Testis (tissue), 5 donors: ENCODE measurements at regions of chr20 and their contacts with region 1.

Region 1: DNA sequence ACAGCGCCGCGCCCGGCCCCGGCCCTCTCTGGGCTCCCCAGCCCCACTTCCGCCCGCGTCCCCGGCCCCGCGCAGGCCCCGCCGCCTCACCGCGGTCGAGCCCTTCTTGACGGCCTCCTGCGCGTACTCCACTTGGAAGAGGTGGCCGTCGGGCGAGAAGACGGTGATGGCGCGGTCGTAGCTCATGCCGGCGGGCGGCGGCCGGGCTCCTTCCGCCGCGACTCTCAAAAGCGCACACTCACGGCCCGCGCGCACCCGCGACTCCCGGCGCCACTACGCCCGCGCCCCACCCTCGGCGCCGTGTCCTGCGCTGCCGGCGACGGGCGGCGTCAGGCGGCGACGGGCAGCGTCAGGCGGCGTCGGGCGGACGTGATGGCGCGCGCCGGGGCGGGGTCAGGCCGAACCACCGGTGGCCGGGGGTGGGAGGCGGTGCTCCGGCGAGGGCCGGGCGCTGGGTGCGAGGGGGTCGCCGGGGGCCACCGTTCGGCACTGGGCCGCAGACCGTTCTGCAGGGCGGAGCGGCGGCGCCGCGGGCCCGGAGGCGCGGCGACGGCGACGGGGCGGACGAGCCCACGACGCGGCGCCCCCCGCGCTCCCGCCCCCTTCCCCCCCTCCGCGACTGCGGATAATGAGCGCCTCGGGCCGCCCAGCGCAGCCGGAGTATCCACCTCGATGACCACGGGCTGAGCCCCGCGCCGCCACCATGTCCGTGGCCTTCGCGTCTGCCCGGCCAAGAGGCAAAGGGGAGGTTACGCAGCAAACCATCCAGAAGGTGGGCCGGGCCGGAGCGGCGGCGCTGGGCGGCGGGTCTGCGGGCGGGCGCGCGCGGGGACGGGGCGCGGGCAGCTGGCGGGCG is at the starts of genes PSMA7 and SS18L1:
- DNase-seq: peak; percentile 84
- H3K4me3 ChIP-seq: peak within 1 kb of the TSS; percentile 77 to 92
- H3K27ac ChIP-seq: peak within 1 kb of the TSS; percentile 77 to 98
- H3K4me1 ChIP-seq: peaks cover 32% of the 10 kb centered on the region
- H3K27me3 ChIP-seq: no peaks in the 10 kb centered on the region
- CTCF ChIP-seq: no peak
- POLR2A ChIP-seq: peak; percentile 77
- total RNA-seq, gene PSMA7: 146 to 203 TPM
- total RNA-seq, gene SS18L1: 54.6 to 69.5 TPM

Region 2: DNA sequence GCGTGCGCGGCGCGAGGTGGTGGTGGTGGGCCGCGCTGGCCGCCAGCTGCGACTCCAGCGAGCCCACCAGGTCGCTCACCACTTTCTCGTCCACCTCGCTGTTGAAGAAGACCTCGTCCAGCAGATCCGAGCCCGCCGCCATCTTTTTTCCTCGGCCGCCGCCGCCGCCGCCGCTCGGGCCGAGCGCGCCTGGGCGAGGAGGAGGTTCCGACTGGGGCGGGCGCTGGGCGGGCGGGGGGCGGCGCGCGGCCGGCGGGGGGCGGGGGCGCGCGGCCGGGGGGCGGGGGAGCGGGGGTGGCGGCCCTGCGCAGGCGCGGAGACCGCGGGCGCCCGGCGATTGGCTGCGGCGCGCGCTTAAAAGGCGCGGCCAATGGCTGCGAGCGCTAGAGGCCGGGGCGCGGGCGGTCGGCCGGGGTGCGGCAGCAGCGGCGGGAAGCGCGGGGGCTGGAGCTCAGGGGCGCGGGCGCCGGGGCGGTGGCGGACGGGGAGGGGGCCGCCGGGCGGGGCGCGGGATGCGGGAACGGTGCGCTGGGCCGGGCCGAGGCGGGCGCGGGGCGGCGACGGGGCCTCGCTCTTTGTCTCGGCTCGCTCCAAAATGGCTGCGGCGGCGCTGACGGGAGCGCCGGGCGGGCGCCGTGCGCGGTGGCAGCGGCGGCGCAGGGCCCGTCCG is 77.5 kb before region 1 on chr20 and contains the start of gene TAF4:
- intact Hi-C with region 1: loop called (anchors 5 kb)
- DNase-seq: peak; percentile 76
- H3K4me3 ChIP-seq: peak within 1 kb of the TSS; percentile 67 to 73
- H3K27ac ChIP-seq: peak within 1 kb of the TSS; percentile 86 to 89
- H3K4me1 ChIP-seq: peaks cover 34% of the 10 kb centered on the region
- H3K27me3 ChIP-seq: no peaks in the 10 kb centered on the region
- CTCF ChIP-seq: no peak
- POLR2A ChIP-seq: peak; percentile 75
- total RNA-seq, gene TAF4: 107 to 111 TPM